T-cell (primary cell): ENCODE measurements at regions of chr11 and their contacts with region 1.

Region 1: DNA sequence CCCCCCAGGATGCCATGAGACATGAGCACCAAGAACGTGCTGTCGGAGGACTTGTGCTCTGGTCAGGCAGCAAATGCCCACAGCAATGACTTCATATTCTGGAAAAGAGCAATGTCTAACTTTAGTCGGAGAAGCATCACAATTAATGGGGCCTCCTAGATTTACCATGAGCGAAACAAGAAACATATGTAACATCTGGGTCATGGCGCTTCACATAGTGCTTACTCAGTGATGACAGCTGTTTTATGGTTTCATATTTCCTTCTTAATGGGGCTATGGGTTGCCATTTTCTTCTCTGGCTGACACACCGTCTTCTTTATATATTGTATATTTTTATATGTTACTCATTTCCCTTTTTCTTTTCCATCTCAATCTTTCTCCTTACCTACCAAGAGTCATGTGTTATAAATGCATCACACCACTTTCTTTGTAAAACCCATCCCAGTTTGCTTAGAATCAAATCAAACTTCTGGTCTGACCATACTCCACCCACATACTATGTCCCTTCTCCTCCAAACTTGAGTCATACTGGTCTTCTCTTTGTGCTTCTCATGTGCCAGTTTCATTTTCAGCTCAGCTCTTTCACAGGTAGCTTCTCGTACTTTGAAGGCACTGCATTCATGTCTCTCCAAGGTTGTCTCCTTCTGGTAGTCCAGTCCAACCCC is 9.4 kb upstream of the CASP12 start:
- DNase-seq: no peak
- ATAC-seq: peak in 1 of 4 experiments; percentile 86
- H3K4me3 ChIP-seq: no peak overlapping the region
- H3K4me3 Mint-ChIP-seq: peak overlapping the region in 2 of 3 donors; percentile 50 to 71
- H3K27ac ChIP-seq: peak overlapping the region; percentile 65
- H3K27ac Mint-ChIP-seq: peak overlapping the region; percentile 75 to 95
- H3K4me1 ChIP-seq: no peaks in the 10 kb centered on the region
- H3K4me1 Mint-ChIP-seq: peaks cover 15 to 34% (median 32%) of the 10 kb centered on the region in 3 donors
- H3K27me3 ChIP-seq: no peaks in the 10 kb centered on the region
- H3K27me3 Mint-ChIP-seq: no peaks in the 10 kb centered on the region

Region 2: GRCh38 chr11:104956528-104956927 is 48.9 kb after region 1 on chr11:
- CTCF ChIA-PET with region 1: no interaction called
- POLR2A ChIA-PET with region 1: interaction called in 1 of 2 experiments, 10 read pairs
- DNase-seq: no peak
- ATAC-seq: no peak
- H3K4me3 ChIP-seq: no peak overlapping the region
- H3K4me3 Mint-ChIP-seq: no peak overlapping the region
- H3K27ac ChIP-seq: no peak overlapping the region
- H3K27ac Mint-ChIP-seq: peak overlapping the region in 1 of 2 donors; percentile 67
- H3K4me1 ChIP-seq: peaks cover 0 to 15% of the 10 kb centered on the region in 2 experiments
- H3K4me1 Mint-ChIP-seq: peaks cover 73 to 81% (median 79%) of the 10 kb centered on the region in 3 donors
- H3K27me3 ChIP-seq: no peaks in the 10 kb centered on the region
- H3K27me3 Mint-ChIP-seq: no peaks in the 10 kb centered on the region